ENCODE measurements at regions of chr20 and their contacts with region 1.

Region 1: DNA sequence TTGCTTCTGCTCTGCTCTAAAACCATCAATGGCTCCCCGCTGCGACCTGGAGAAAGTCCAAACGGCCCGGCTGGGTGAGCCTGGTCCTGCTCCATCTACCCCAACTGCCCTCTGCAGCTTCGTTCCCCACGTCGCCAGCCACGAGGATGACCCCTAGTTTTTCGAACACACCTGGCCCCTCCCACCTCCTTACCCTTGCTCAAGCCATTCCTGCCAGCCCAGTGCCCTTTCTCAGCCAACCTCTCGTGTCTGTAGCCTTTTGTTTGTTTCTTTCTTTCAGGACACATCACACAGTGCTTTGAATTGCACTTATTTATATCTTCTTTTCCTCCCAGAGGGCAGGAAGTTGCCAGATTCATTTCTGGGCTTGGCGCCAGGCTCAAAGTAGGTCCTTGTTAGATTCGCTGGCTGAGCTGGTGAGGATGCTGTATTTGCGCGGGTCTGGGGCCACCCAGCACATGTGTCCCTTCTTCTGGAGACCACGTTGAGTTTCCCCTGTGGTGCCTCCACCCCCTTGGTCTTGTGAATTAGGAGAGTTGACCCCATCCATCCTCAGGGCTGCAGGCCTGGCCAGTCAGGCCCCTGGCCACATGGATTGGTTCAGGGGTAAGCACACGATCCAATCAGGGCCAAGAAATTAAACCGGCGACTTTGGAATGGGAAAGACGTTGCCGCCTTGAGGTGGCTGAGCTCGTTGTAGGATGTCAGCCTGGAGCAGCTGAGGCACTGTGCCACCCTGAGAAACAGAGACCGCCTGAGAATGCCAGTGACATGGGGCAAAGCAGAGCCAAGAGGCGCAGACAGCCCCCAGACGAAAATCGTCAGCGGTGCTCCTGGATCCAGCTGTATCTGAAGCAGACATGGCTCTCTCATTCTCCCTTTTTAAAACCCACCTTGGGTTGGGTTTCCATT is 156.0 kb downstream of the CEBPB start:
- DNase-seq: peak; percentile 55
- H3K27ac ChIP-seq: peak overlapping the region; percentile 82
- CTCF ChIP-seq: no peak

Region 2: GRCh38 chr20:50208085-50208491 is 138.5 kb before region 1 on chr20:
- CTCF ChIA-PET with region 1: no interaction called
- POLR2A ChIA-PET with region 1: no interaction called
- DNase-seq: no peak
- H3K27ac ChIP-seq: no peak overlapping the region
- CTCF ChIP-seq: no peak

Region 3: DNA sequence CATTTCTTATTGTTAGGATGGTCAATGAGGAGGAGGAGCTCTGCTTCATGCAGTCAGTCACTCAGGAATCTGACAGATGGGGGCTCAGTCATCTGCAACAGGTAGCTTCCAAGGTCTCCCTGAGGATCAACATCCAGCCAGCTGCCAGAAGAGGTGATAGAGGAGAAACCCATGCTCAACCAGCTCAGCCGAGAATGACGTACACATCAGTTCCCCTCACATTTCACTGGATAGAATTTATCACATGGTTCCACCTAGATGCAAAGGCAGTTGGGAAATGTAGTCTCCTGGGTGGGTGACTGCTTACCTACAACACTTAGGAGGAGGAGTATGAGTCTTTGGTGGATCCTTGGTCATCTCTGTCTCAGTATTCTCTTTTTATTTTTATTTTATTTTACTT is 11.5 kb before region 1 on chr20:
- CTCF ChIA-PET with region 1: interaction called, 13 read pairs
- POLR2A ChIA-PET with region 1: no interaction called
- DNase-seq: peak; percentile 85
- H3K27ac ChIP-seq: peak overlapping the region; percentile 89
- CTCF ChIP-seq: no peak